ENCODE measurements at regions of chr21 and their contacts with region 1.

Region 1: DNA sequence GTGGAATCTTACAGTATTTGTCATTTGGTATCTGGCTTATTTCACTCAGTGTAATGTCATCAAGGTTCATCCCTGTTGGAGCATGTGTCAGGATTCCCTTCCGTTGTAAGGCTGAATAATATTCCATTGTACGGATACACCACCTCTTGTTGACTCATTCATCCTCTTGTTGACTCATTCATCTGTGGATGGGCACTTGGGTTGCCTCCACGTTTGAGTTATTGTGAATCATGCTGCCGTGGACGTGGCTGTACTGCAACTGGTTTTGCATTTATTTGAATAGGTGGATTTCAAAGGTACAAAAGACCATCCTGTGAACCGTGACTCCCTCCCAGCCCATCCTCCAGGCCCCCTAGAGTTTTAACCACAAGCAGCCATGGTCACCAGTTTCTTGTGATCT is 11.9 kb upstream of the TCP10L start:
- H3K4me3 ChIP-seq: no peak overlapping the region
- H3K27ac ChIP-seq: no peak overlapping the region
- H3K4me1 ChIP-seq: no peaks in the 10 kb centered on the region
- CTCF ChIP-seq: no peak

Region 2: DNA sequence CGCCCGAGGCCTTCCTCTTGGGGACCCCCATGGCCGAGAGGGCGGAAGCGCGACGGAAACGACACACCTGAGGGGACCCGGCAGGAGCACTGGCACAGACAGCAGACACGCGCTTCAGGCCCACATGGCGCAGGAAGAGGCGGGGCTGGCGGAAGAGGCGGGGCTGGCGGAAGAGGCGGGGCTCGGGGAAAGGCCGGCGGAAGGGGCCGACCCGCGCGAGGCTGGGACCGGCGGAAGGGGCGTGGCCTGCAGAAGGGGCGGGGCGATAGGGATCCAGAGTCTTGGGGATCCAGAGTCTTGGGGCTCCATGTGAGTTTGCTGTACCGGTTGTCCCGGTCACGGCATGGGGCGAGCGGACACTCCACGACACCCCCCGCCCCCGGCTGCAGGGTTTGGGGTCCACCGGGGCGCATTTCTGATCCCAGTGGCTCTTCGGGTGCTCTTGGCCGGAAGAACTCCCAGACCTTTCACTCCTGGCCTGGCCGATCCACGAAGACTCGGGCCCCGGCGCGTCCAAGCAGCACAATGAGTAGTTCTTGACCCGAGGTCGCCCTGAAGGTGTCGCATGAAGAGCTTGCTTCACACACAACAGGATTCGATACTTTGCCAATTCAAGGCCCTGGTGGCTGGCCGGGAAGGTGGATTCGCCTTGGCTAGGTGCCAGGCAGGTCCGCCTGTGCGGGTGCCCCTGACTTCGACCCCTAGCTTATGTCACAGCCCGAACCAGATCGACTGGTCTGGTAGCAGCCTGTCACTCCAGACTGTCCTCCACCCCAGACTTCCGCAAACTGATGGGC is 204.1 kb before region 1 on chr21 and contains the start of gene URB1:
- CTCF ChIA-PET with region 1: interaction called, 14 read pairs
- POLR2A ChIA-PET with region 1: no interaction called
- H3K4me3 ChIP-seq: peak within 1 kb of the TSS; percentile 95
- H3K27ac ChIP-seq: peak within 1 kb of the TSS; percentile 37; the same call in 1 of the 2 replicates
- H3K4me1 ChIP-seq: peaks cover 8% of the 10 kb centered on the region
- CTCF ChIP-seq: no peak; the same call in 1 of the 2 replicates

Region 3: DNA sequence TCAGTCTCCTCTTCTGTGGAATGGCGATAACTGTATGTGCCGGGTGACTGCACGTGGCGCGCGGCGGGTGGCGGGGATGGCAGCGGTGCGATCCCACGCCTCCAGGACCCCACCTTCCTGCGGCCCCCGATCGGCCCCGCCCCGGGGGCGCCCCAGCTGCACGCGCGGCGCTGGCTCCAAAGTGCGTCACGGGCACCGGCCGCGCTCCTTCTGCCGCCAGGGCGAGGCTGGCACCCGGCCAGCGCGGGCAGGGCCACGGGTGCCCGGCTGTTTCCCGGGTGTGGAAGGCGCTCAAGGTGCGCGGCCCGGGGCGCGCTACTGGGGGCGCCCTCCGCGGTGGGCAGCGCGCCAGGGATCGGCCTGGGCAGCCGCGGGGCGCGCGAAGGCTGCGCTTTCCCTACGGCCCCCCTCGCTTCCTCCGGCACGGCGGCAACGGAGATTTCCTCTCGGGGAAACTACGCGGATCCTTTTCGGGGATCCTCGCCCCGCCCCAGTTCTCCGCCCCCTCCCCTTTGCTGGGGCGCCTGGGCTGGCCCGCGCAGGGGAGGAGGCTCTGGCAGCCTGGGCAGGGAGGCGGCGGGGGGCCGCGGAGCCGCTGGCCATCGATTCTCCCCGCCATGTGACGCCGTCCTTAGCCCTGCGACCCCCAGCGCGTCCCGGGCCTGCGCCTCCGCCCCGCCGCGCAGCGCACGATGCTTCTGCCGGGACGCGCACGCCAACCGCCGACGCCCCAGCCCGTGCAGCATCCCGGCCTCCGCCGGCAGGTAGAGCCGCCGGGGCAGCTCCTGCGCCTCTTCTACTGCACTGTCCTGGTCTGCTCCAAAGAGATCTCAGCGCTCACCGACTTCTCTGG is 184.8 kb before region 1 on chr21 and contains the start of gene EVA1C:
- CTCF ChIA-PET with region 1: interaction called, 209 read pairs
- POLR2A ChIA-PET with region 1: interaction called, 10 read pairs
- H3K4me3 ChIP-seq: peak within 1 kb of the TSS; percentile 39
- H3K27ac ChIP-seq: peak within 1 kb of the TSS; percentile 67; the same call in 1 of the 2 replicates
- H3K4me1 ChIP-seq: peaks cover 13% of the 10 kb centered on the region
- CTCF ChIP-seq: no peak

Region 4: GRCh38 chr21:32587120-32587519 is 10.1 kb before region 1 on chr21:
- CTCF ChIA-PET with region 1: interaction called, 49 read pairs
- POLR2A ChIA-PET with region 1: interaction called, 3 read pairs
- H3K4me3 ChIP-seq: no peak overlapping the region
- H3K27ac ChIP-seq: no peak overlapping the region
- H3K4me1 ChIP-seq: no peaks in the 10 kb centered on the region
- CTCF ChIP-seq: no peak

Measured in HEK293 (cell line).